CD4-positive, alpha-beta memory T cell (primary cell): ENCODE measurements at regions of chr13 and their contacts with region 1.

Region 1: GRCh38 chr13:52194184-52194868 is 34.9 kb upstream of the NEK3 start:
- DNase-seq: peak; percentile 84 to 88 (median 85)
- H3K4me3 ChIP-seq: peak overlapping the region; percentile 82 to 94
- H3K4me3 Mint-ChIP-seq: peak overlapping the region; percentile 96 to 99 (median 98)
- H3K27ac ChIP-seq: peak overlapping the region; percentile 68
- H3K27ac Mint-ChIP-seq: peak overlapping the region; percentile 94 to 99 (median 97)
- H3K4me1 ChIP-seq: peaks cover 27% of the 10 kb centered on the region
- H3K4me1 Mint-ChIP-seq: peaks cover 23 to 41% (median 35%) of the 10 kb centered on the region in 4 donors
- H3K27me3 ChIP-seq: no peaks in the 10 kb centered on the region
- H3K27me3 Mint-ChIP-seq: no peaks in the 10 kb centered on the region

Region 2: DNA sequence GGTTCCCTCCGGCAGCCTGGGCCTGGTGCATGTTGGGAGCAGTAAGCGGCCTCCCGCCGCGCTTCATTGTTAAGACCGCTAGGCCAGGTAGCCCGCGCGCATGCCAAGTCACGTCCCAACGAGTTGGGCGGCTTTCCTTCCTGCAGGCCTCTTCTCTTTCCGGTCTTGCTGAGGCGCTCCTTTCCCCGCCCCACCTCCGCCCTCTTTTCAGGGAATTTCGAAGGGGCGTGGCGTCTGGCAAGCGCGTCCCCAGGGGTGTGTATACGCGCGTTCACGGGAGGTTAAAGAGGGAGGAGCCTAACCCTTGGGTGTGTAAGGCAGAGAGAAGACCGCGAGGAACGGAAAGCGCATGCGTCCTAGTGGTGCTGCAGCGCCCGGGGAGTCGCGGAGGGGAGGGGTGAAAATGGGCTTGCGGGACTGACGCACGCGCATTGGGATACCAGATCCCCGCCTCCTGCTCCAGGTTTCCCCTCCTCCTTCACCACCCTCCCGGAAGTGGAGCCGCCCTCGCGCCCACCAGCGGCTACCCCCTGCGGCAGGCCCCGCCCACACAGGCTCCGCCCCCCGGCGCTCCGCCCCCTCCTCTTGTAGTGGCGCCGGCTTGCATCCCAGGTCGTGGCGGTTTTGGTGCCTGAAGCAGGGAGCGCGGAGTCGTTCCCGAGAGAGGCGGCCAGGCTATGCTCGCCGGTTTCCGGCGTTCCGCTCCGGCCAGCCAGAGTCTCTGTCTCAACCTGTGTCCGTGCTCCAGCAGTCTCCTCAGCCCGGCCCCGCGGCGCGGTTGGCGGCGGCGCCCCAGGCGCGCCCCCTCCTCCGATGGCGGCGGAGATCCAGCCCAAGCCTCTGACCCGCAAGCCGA is 610.2 kb before region 1 on chr13 and contains the start of gene WDFY2:
- CTCF ChIA-PET with region 1: no interaction called
- POLR2A ChIA-PET with region 1: interaction called, 3 read pairs
- intact Hi-C with region 1: loop called (anchors 2 kb)
- DNase-seq: peak; percentile 99 to 100 (median 100)
- H3K4me3 ChIP-seq: peak within 1 kb of the TSS; percentile 65 to 92
- H3K4me3 Mint-ChIP-seq: peak within 1 kb of the TSS; percentile 97 to 100 (median 99)
- H3K27ac ChIP-seq: peak within 1 kb of the TSS; percentile 88
- H3K27ac Mint-ChIP-seq: peak within 1 kb of the TSS; percentile 96 to 100 (median 100)
- H3K4me1 ChIP-seq: peaks cover 26% of the 10 kb centered on the region
- H3K4me1 Mint-ChIP-seq: peaks cover 27 to 44% (median 35%) of the 10 kb centered on the region in 4 donors
- H3K27me3 ChIP-seq: no peaks in the 10 kb centered on the region
- H3K27me3 Mint-ChIP-seq: no peaks in the 10 kb centered on the region
- total RNA-seq, gene WDFY2: 20.0 to 21.8 TPM

Region 3: GRCh38 chr13:51825165-51825592 is 369.1 kb before region 1 on chr13:
- CTCF ChIA-PET with region 1: interaction called, 6 read pairs
- POLR2A ChIA-PET with region 1: interaction called, 9 read pairs
- intact Hi-C with region 1: loop called (anchors 5 kb)
- DNase-seq: peak; percentile 57 to 84 (median 79)
- H3K4me3 ChIP-seq: peak overlapping the region; percentile 31 to 56
- H3K4me3 Mint-ChIP-seq: peak overlapping the region; percentile 86 to 95 (median 90)
- H3K27ac ChIP-seq: peak overlapping the region; percentile 65
- H3K27ac Mint-ChIP-seq: peak overlapping the region; percentile 88 to 95 (median 94)
- H3K4me1 ChIP-seq: peaks cover 81% of the 10 kb centered on the region
- H3K4me1 Mint-ChIP-seq: peaks cover 56 to 99% (median 77%) of the 10 kb centered on the region in 4 donors
- H3K27me3 ChIP-seq: no peaks in the 10 kb centered on the region
- H3K27me3 Mint-ChIP-seq: no peaks in the 10 kb centered on the region

Region 4: DNA sequence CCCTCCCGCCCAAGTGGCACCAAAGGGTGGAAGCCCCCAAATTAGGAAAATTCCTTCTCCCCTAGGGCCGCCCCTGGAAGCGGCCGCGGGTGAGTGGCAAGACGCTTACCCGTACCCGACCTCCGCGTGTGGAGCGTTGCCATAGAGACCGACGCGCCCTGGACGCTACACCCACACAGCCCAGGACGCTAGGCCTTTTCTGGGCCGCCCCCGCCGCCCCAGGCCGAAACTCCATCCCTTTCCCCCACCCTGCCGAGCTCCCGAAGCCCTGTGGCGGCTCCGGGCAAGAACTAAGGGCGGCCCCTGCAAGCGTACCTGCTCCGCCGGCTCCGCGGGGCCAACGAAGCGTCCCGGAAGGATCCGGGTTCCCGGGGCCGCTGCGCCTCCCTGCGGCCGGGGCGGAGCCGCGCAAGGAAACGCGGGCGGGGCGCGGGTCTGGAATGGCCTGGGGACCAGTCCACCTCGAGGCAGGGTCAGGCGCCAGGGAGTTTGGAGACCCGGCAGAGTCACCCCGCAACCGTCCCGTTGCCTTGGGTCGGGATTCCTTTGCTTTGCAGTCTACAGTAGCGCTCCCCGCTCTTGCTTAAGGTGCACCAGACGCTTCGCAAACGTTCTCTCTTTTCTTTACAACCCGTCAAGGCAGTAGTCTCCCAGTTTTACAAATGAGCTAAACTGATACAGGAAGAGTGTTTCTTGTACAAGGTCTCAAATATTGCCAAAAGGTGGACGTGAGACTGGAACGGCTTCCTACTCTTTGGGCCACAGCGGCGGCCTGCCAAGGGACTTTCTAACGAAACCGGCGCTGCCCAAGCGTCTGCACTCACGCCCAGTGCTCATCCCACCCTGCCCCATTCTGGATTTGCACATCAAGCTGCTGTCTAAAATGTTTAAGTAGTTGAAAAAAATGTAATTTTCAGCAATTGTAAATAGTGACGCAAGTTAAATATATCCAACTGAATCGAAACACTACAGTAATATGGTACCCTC is 65.3 kb before region 1 on chr13 and contains the start of gene NEK5:
- CTCF ChIA-PET with region 1: interaction called, 5 read pairs
- POLR2A ChIA-PET with region 1: no interaction called
- intact Hi-C with region 1: loop called (anchors 2 kb)
- DNase-seq: peak; percentile 48 to 58 (median 55)
- H3K4me3 ChIP-seq: peak within 1 kb of the TSS; percentile 59 to 73
- H3K4me3 Mint-ChIP-seq: peak within 1 kb of the TSS; percentile 77 to 95 (median 86)
- H3K27ac ChIP-seq: no peak within 1 kb of the TSS
- H3K27ac Mint-ChIP-seq: peak within 1 kb of the TSS in 6 of 7 donors; percentile 3 to 50 (median 18)
- H3K4me1 ChIP-seq: peaks cover 19% of the 10 kb centered on the region
- H3K4me1 Mint-ChIP-seq: peaks cover 11 to 19% (median 13%) of the 10 kb centered on the region in 4 donors
- H3K27me3 ChIP-seq: peaks cover 4% of the 10 kb centered on the region
- H3K27me3 Mint-ChIP-seq: peaks cover 0 to 3% of the 10 kb centered on the region in 2 donors
- total RNA-seq, gene NEK5: not detected

Region 5: GRCh38 chr13:52617070-52618060 is 423.0 kb after region 1 on chr13:
- CTCF ChIA-PET with region 1: no interaction called
- POLR2A ChIA-PET with region 1: no interaction called
- intact Hi-C with region 1: loop called (anchors 10 kb)
- DNase-seq: peak; percentile 82 to 86 (median 84)
- H3K4me3 ChIP-seq: peak overlapping the region; percentile 57 to 67
- H3K4me3 Mint-ChIP-seq: peak overlapping the region; percentile 98 to 99 (median 99)
- H3K27ac ChIP-seq: peak overlapping the region; percentile 58
- H3K27ac Mint-ChIP-seq: peak overlapping the region; percentile 86 to 98 (median 97)
- H3K4me1 ChIP-seq: peaks cover 30% of the 10 kb centered on the region
- H3K4me1 Mint-ChIP-seq: peaks cover 20 to 55% (median 38%) of the 10 kb centered on the region in 4 donors
- H3K27me3 ChIP-seq: no peaks in the 10 kb centered on the region
- H3K27me3 Mint-ChIP-seq: no peaks in the 10 kb centered on the region

Region 6: GRCh38 chr13:52775511-52775910 is 581.2 kb after region 1 on chr13:
- CTCF ChIA-PET with region 1: no interaction called
- POLR2A ChIA-PET with region 1: no interaction called
- intact Hi-C with region 1: no loop called
- DNase-seq: no peak
- H3K4me3 ChIP-seq: no peak overlapping the region
- H3K4me3 Mint-ChIP-seq: no peak overlapping the region
- H3K27ac ChIP-seq: no peak overlapping the region
- H3K27ac Mint-ChIP-seq: no peak overlapping the region
- H3K4me1 ChIP-seq: no peaks in the 10 kb centered on the region
- H3K4me1 Mint-ChIP-seq: no peaks in the 10 kb centered on the region
- H3K27me3 ChIP-seq: no peaks in the 10 kb centered on the region
- H3K27me3 Mint-ChIP-seq: peaks cover 13 to 18% of the 10 kb centered on the region in 2 donors